CD14-positive monocyte (primary cell): ENCODE measurements at regions of chr3 and their contacts with region 1.

Region 1: GRCh38 chr3:183306798-183307671 is 54.0 kb downstream of the B3GNT5 start:
- DNase-seq: peak; percentile 95 to 98 (median 98)
- H3K4me3 ChIP-seq: peak overlapping the region in 2 of 3 experiments; percentile 6 to 60
- H3K4me3 Mint-ChIP-seq: peak overlapping the region; percentile 47 to 78
- H3K27ac ChIP-seq: peak overlapping the region; percentile 75 to 93
- H3K27ac Mint-ChIP-seq: peak overlapping the region; percentile 91 to 97 (median 95)
- H3K4me1 ChIP-seq: peaks cover 45 to 54% of the 10 kb centered on the region in 2 donors
- H3K4me1 Mint-ChIP-seq: peaks cover 51% of the 10 kb centered on the region
- H3K27me3 ChIP-seq: no peaks in the 10 kb centered on the region
- H3K27me3 Mint-ChIP-seq: peaks cover 2 to 9% (median 3%) of the 10 kb centered on the region in 3 donors
- CTCF ChIP-seq: no peak

Region 2: GRCh38 chr3:183210839-183211341 is 96.1 kb before region 1 on chr3:
- intact Hi-C with region 1: loop called (anchors 5 kb)
- DNase-seq: peak; percentile 84 to 93 (median 92)
- H3K4me3 ChIP-seq: peak overlapping the region in 2 of 3 experiments; percentile 12 to 55
- H3K4me3 Mint-ChIP-seq: peak overlapping the region; percentile 32 to 68
- H3K27ac ChIP-seq: peak overlapping the region; percentile 81 to 89
- H3K27ac Mint-ChIP-seq: peak overlapping the region; percentile 95 to 99 (median 96)
- H3K4me1 ChIP-seq: peaks cover 39 to 47% of the 10 kb centered on the region in 2 donors
- H3K4me1 Mint-ChIP-seq: peaks cover 54% of the 10 kb centered on the region
- H3K27me3 ChIP-seq: no peaks in the 10 kb centered on the region
- H3K27me3 Mint-ChIP-seq: peaks cover 0 to 5% (median 0%) of the 10 kb centered on the region in 3 donors
- CTCF ChIP-seq: no peak

Region 3: DNA sequence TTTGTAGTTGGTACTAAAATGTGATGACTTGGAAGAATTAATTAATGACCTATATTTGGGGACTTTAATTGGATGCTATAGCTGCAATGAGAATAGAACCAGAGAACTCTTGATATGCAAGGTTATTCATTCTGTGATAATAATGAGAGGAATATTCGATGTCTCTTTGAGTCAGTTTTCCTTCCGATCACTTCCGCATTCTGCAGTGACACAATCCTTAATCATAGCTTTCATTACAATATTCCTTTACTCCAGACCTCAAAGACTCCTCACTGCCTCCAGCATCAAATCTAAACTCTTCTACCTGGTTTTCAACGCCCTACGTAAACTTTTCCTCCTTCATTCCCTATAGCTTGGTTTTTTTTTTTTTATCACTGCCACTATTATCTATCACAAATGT is 32.4 kb before region 1 on chr3:
- intact Hi-C with region 1: loop called in 1 of 2 experiments (anchors 5 kb)
- DNase-seq: peak in 2 of 3 donors; percentile 62 to 69
- H3K4me3 ChIP-seq: peak overlapping the region in 1 of 3 experiments; percentile 30
- H3K4me3 Mint-ChIP-seq: no peak overlapping the region
- H3K27ac ChIP-seq: peak overlapping the region in 1 of 2 donors; percentile 70
- H3K27ac Mint-ChIP-seq: peak overlapping the region; percentile 79 to 92 (median 86)
- H3K4me1 ChIP-seq: peaks cover 31 to 42% of the 10 kb centered on the region in 2 donors
- H3K4me1 Mint-ChIP-seq: peaks cover 27% of the 10 kb centered on the region
- H3K27me3 ChIP-seq: no peaks in the 10 kb centered on the region
- H3K27me3 Mint-ChIP-seq: no peaks in the 10 kb centered on the region
- CTCF ChIP-seq: no peak

Region 4: DNA sequence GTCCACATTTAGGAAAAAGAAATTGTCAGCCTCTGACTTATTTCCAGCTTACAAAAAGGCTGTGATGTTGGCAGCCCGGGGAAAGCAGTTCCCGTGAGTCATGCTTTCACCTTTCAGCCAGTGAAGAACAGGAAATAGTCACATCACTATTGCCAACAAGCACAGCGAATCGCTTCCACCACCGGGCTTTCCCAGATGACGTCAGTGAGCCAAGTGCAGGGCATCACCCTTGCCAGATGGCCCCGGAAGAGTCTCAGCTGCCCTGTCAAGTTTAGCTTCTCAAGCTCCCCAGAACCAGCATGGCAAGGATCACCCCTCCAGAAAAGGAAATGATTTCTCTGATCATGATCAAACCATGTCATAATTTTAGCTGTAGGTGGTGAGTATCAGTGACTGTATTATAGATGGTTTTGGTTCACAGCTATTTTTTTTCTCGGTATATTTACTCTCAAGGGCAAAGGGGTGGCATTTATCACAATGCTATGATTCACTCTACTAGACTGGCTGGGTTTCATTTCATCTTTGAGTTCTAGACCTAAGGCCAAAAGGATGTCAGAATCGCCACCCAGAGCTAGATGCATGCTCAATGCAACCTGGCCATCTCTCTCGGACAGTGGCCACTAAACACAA is 21.1 kb before region 1 on chr3:
- intact Hi-C with region 1: loop called in 1 of 2 experiments (anchors 2 kb)
- DNase-seq: peak; percentile 97 to 100 (median 99)
- H3K4me3 ChIP-seq: peak overlapping the region in 1 of 3 experiments; percentile 30
- H3K4me3 Mint-ChIP-seq: peak overlapping the region; percentile 48 to 56
- H3K27ac ChIP-seq: peak overlapping the region; percentile 44 to 85
- H3K27ac Mint-ChIP-seq: peak overlapping the region; percentile 87 to 96 (median 93)
- H3K4me1 ChIP-seq: peaks cover 24 to 29% of the 10 kb centered on the region in 2 donors
- H3K4me1 Mint-ChIP-seq: peaks cover 34% of the 10 kb centered on the region
- H3K27me3 ChIP-seq: no peaks in the 10 kb centered on the region
- H3K27me3 Mint-ChIP-seq: peaks cover 0 to 2% (median 1%) of the 10 kb centered on the region in 3 donors
- CTCF ChIP-seq: no peak

Region 5: DNA sequence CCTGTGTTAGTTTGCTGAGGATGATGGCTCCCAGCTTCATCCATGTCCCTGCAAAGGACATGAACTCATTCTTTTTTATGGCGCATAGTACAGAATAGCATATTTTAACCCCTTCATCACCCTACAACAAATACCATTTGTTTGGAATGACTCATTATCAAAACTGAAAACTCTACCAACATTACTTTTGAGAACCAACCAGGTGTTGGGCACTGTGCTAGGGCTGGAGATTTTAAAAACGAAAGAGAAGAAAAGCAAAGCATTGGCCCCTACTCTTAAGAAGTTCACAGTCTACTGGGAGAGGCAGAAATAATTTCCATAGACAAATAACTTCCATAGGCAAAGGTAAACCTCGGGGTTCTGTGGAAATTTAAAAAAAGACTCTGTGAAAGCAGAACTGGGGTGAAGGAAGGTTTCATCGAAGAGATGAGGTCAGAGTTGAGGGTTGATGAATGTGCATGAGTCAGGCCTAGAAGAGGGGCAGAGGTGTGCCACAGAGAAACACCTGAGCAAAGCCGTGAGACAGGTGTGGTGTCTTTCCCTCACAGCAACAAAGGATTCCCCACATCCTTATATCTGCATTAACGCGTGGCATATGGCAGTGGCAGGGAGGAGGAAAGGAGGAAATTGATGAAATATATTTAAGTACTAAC is 70.4 kb after region 1 on chr3:
- intact Hi-C with region 1: loop called in 1 of 2 experiments (anchors 5 kb)
- DNase-seq: peak in 2 of 3 donors; percentile 45 to 51
- H3K4me3 ChIP-seq: no peak overlapping the region
- H3K4me3 Mint-ChIP-seq: no peak overlapping the region
- H3K27ac ChIP-seq: no peak overlapping the region
- H3K27ac Mint-ChIP-seq: peak overlapping the region in 5 of 7 donors; percentile 23 to 51 (median 33)
- H3K4me1 ChIP-seq: peaks cover 52 to 74% of the 10 kb centered on the region in 2 donors
- H3K4me1 Mint-ChIP-seq: peaks cover 66% of the 10 kb centered on the region
- H3K27me3 ChIP-seq: no peaks in the 10 kb centered on the region
- H3K27me3 Mint-ChIP-seq: peaks cover 0 to 3% (median 2%) of the 10 kb centered on the region in 3 donors
- CTCF ChIP-seq: no peak

Region 6: GRCh38 chr3:183427876-183428446 is 120.9 kb after region 1 on chr3:
- intact Hi-C with region 1: no loop called
- DNase-seq: peak; percentile 29 to 40 (median 37)
- H3K4me3 ChIP-seq: peak overlapping the region; percentile 46 to 81 (median 52)
- H3K4me3 Mint-ChIP-seq: peak overlapping the region; percentile 82 to 96
- H3K27ac ChIP-seq: no peak overlapping the region
- H3K27ac Mint-ChIP-seq: peak overlapping the region in 1 of 7 donors; percentile 30
- H3K4me1 ChIP-seq: peaks cover 15 to 21% of the 10 kb centered on the region in 2 donors
- H3K4me1 Mint-ChIP-seq: peaks cover 17% of the 10 kb centered on the region
- H3K27me3 ChIP-seq: peaks cover 20 to 55% of the 10 kb centered on the region in 2 donors
- H3K27me3 Mint-ChIP-seq: peaks cover 51 to 68% (median 56%) of the 10 kb centered on the region in 3 donors
- CTCF ChIP-seq: no peak

Region 7: DNA sequence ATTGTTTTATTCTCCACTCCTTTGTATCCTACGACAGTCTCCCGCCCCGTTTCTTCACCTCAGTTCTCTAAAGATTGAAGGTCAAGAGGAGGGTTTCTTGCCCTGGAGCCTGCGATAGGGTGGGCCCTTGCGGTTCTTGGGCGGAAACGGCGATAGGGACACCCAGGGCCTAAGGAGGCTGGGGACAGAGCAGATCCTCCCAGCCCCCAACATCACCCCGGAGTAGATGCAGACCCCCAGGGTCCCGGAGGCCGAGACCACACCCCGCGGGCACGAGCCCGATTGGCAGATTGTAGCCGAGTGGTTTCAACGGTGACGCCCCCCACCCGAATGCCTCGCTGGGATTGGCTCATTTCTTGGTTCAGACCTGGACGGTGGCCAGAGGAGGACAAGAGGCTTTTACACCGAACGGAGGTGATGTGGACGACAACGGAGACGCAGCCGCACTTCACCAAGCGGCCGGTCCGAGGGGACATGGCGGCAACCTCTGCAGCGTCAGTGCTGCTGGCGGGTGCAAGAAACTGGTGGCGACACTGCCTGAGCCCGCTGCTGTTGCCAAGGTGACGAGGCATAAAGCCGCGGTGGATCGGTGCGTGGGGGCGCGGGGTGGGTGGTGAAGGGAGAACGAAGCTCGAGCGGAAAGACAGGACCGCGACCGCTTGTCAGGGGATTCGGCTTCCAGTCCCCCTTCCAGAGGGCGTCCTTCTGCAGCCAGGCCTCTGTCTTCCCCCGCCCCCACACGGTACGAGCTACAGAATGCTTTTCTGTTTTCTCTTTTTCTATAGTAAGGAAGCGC is 140.4 kb after region 1 on chr3:
- intact Hi-C with region 1: no loop called
- DNase-seq: peak; percentile 49 to 57 (median 50)
- H3K4me3 ChIP-seq: peak overlapping the region; percentile 60 to 97 (median 95)
- H3K4me3 Mint-ChIP-seq: peak overlapping the region; percentile 98 to 99
- H3K27ac ChIP-seq: peak overlapping the region; percentile 77 to 83
- H3K27ac Mint-ChIP-seq: peak overlapping the region; percentile 85 to 90 (median 90)
- H3K4me1 ChIP-seq: peaks cover 6 to 14% of the 10 kb centered on the region in 2 donors
- H3K4me1 Mint-ChIP-seq: peaks cover 17% of the 10 kb centered on the region
- H3K27me3 ChIP-seq: no peaks in the 10 kb centered on the region
- H3K27me3 Mint-ChIP-seq: peaks cover 0 to 2% (median 1%) of the 10 kb centered on the region in 3 donors
- CTCF ChIP-seq: no peak

Region 8: DNA sequence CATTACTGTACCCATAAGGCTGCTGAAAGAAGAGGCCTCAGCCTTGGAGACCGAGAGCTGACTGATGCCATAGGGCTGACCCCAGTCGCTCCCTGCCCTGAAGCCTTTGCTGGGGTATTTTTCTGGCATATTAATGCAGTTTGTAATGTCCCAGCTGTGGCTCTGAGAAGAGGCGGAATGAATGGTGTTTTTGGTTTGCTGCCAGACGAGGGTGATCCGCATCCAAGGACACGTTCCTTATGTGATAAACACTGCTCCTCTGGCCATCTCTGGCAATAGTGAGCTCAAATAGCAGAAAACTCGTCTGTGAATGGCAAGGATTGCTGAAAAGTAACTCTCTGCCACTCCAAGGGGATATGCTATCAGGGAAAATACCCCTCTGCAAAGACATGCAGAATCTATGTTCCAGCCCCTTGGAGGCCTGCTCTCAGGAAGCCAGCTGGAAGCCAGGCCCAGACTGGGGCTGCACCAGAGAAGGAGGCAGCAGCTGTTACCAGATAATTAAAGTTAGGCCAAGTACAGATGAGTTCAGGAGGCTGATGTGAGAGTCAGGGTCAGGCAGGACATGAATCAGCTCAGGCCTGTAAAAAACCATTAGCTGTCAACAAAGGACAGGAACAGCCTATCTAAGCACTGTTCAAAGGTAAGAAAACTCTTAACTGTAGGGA is 277.3 kb after region 1 on chr3:
- intact Hi-C with region 1: no loop called
- DNase-seq: no peak
- H3K4me3 ChIP-seq: no peak overlapping the region
- H3K4me3 Mint-ChIP-seq: no peak overlapping the region
- H3K27ac ChIP-seq: no peak overlapping the region
- H3K27ac Mint-ChIP-seq: no peak overlapping the region
- H3K4me1 ChIP-seq: peaks cover 19 to 23% of the 10 kb centered on the region in 2 donors
- H3K4me1 Mint-ChIP-seq: peaks cover 22% of the 10 kb centered on the region
- H3K27me3 ChIP-seq: no peaks in the 10 kb centered on the region
- H3K27me3 Mint-ChIP-seq: peaks cover 0 to 3% (median 2%) of the 10 kb centered on the region in 3 donors
- CTCF ChIP-seq: no peak